ENCODE measurements at regions of chr9 and their contacts with region 1.

Region 1: DNA sequence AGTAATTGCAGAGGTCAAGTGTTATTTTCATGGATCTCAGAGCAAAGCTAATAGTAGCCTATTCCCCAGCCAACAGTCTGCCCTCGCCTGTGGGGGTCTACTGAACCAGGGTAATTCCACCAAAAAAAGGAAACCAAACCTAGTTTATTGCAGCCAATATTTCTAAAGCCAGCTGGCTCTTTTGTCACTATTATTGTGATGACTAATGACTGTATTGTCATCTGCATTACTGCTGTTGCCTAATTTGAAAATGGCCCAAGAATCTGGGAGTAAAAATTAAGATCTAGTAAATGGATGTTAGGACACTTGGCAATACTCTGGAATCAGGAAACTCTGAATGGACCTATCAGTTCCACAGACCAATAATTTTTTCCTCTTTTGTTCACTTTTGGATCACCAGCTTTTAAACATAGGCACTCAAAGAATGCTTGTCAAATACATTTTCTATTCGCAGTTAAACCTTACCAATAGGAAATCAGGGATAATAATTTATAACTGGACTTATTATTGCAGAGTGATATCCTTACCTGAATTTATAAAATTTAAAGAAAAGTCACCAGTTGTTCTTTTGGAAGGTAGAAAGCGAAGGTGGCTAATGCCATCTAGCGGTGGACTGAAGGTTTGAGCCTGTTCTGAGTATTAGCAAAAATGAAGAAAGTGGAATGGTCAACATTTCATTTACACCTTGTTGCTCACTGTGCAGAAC is 69.2 kb downstream of the SYK start:
- DNase-seq: peak; percentile 79
- H3K4me3 Mint-ChIP-seq: no peak overlapping the region
- H3K27ac Mint-ChIP-seq: no peak overlapping the region
- H3K4me1 Mint-ChIP-seq: no peaks in the 10 kb centered on the region
- H3K27me3 Mint-ChIP-seq: peaks cover 13% of the 10 kb centered on the region

Region 2: DNA sequence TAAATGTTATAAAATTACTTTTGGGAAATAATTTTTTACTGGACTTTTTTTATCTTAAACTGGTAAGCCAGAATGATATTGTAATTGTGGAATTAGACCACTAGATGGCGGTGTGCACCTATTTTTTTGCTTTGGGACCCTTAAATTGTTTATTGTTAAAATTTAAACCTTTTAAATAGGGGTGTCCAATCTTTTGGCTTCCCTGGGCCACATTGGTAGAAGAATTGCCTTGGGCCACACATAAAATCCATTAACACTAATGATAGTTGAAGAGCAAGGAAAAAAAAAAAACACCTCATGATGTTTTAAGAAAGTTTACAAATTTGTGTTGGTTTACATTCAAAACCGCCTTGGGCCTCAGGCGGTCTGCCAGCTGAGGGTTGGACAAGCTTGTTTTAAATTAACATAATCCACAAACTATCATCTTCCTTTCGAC is 1294.4 kb before region 1 on chr9:
- intact Hi-C with region 1: loop called (anchors 5 kb)
- DNase-seq: peak; percentile 75
- H3K4me3 Mint-ChIP-seq: no peak overlapping the region
- H3K27ac Mint-ChIP-seq: no peak overlapping the region
- H3K4me1 Mint-ChIP-seq: peaks cover 15% of the 10 kb centered on the region
- H3K27me3 Mint-ChIP-seq: peaks cover 66% of the 10 kb centered on the region

Region 3: GRCh38 chr9:90142580-90142979 is 728.2 kb before region 1 on chr9:
- intact Hi-C with region 1: loop called (anchors 5 kb)
- DNase-seq: peak; percentile 82
- H3K4me3 Mint-ChIP-seq: no peak overlapping the region
- H3K27ac Mint-ChIP-seq: no peak overlapping the region
- H3K4me1 Mint-ChIP-seq: peaks cover 2% of the 10 kb centered on the region
- H3K27me3 Mint-ChIP-seq: peaks cover 42% of the 10 kb centered on the region

Region 4: GRCh38 chr9:90219548-90220118 is 651.1 kb before region 1 on chr9:
- intact Hi-C with region 1: loop called (anchors 5 kb)
- DNase-seq: peak; percentile 76
- H3K4me3 Mint-ChIP-seq: no peak overlapping the region
- H3K27ac Mint-ChIP-seq: no peak overlapping the region
- H3K4me1 Mint-ChIP-seq: no peaks in the 10 kb centered on the region
- H3K27me3 Mint-ChIP-seq: no peaks in the 10 kb centered on the region